OCI-LY7 (cell line): ENCODE measurements at regions of chr4 and their contacts with region 1.

Region 1: DNA sequence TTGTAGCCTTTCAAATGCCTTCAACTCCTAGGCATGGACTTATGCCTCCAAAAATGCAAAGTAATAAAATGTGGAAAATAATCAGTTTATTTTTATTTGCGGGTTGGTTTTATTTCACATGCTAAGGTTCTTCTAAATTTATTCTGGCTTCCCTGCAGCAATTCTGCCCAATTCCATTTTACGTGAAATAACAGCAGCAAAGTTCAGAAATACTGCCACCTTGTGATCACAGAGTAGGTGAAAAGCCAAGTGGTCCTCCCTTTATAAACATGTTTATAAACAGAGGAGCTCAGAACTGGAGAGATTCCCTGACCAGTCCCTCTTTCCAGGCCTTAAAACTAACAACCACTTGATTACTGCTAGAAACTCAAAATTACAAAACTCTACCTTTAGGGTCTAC is 14.7 kb upstream of the DCHS2 start:
- DNase-seq: peak; percentile 41
- H3K4me3 ChIP-seq: no peak overlapping the region
- H3K27ac ChIP-seq: no peak overlapping the region
- H3K4me1 ChIP-seq: no peaks in the 10 kb centered on the region
- CTCF ChIP-seq: peak; percentile 82

Region 2: GRCh38 chr4:154329268-154329868 is 176.9 kb before region 1 on chr4:
- CTCF ChIA-PET with region 1: interaction called, 4 read pairs
- POLR2A ChIA-PET with region 1: no interaction called
- intact Hi-C with region 1: loop called (anchors 2 kb)
- DNase-seq: peak; percentile 44
- H3K4me3 ChIP-seq: no peak overlapping the region
- H3K27ac ChIP-seq: no peak overlapping the region
- H3K4me1 ChIP-seq: no peaks in the 10 kb centered on the region
- CTCF ChIP-seq: peak; percentile 75

Region 3: DNA sequence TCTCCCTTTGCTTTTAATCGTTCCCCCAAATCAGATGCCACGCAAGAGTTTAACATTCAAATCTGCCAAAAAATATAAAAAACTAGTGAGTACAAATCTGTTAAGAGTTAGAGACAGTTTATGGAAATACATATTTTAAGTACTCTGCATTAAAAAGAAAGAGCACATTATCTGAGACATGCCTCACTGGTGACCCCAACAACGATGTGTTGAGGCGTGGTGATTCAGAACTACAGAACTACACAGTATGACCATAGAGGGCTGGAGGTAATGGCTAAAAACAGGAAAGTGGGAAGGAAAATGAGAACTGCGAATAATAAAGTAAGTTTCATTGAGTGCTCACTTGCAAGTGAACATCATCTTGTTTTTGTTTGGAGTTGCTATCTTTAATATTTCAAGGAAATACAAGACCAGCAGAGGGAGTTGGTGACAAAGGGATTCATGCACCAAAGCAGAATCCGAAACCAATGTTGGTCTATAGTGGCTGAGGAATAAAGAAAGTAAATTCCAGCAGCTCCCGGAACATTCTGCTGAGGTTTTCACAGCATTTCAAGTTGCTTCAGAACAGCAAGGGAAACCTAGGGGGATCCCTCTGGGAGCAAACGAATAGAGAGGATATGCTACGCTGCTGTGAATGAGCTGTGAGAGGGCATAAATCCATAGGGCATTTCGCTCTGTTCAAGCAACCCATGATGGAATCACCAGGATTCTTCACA is 106.8 kb before region 1 on chr4:
- CTCF ChIA-PET with region 1: no interaction called
- POLR2A ChIA-PET with region 1: interaction called, 3 read pairs
- intact Hi-C with region 1: loop called (anchors 5 kb)
- DNase-seq: no peak
- H3K4me3 ChIP-seq: no peak overlapping the region
- H3K27ac ChIP-seq: no peak overlapping the region
- H3K4me1 ChIP-seq: no peaks in the 10 kb centered on the region
- CTCF ChIP-seq: peak; percentile 48

Region 4: DNA sequence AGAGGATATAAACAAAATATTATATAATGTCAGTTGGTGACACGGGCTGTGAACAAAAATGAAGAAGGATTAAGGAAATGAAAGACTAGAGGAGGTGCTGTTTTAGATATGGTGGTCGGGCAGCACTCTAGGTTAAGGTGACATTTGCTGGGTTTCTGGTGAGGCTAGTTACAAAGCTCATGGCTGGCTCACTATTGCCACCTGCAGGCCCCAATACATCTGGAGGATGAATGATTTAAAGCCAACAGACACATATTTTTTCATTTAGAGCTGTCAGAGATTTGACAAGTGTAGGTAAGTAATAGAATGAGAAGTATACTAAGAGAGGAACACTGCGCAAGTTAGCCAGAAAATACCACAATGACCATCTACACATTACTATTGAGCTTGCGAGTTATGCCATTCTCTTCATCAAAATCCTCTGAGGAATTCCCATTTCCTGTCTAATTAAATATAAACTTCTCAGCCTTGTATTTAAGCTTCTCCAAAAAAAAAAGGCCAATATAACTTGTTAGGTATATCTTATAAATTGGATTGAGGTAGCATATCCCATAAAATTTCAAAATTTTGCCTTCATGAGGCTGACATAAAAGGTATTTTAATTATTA is 112.6 kb after region 1 on chr4:
- CTCF ChIA-PET with region 1: no interaction called
- POLR2A ChIA-PET with region 1: no interaction called
- intact Hi-C with region 1: loop called (anchors 1 kb)
- DNase-seq: peak; percentile 73
- H3K4me3 ChIP-seq: no peak overlapping the region
- H3K27ac ChIP-seq: no peak overlapping the region
- H3K4me1 ChIP-seq: peaks cover 9% of the 10 kb centered on the region
- CTCF ChIP-seq: peak; percentile 88

Region 5: DNA sequence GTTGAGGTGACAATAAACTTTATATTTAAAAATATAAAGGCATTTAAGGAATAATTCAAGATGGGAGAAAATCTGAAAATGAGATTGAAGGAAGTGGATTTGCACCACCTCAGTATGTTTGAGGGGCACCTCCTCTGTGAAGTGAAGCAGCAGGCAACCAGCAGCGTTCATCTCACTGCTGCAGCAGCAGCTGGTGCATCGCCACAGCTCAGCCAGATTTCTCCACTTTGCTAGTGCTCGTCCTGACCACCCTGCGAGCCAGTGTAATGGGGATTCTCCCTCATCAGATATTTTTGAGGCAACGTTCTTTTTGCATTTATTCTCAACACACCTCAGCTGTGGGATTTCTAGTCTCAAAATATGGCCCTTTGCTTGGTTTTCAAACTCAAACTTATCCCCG is 251.5 kb after region 1 on chr4:
- CTCF ChIA-PET with region 1: no interaction called
- POLR2A ChIA-PET with region 1: no interaction called
- intact Hi-C with region 1: no loop called
- DNase-seq: no peak
- H3K4me3 ChIP-seq: no peak overlapping the region
- H3K27ac ChIP-seq: no peak overlapping the region
- H3K4me1 ChIP-seq: no peaks in the 10 kb centered on the region
- CTCF ChIP-seq: no peak

Region 6: DNA sequence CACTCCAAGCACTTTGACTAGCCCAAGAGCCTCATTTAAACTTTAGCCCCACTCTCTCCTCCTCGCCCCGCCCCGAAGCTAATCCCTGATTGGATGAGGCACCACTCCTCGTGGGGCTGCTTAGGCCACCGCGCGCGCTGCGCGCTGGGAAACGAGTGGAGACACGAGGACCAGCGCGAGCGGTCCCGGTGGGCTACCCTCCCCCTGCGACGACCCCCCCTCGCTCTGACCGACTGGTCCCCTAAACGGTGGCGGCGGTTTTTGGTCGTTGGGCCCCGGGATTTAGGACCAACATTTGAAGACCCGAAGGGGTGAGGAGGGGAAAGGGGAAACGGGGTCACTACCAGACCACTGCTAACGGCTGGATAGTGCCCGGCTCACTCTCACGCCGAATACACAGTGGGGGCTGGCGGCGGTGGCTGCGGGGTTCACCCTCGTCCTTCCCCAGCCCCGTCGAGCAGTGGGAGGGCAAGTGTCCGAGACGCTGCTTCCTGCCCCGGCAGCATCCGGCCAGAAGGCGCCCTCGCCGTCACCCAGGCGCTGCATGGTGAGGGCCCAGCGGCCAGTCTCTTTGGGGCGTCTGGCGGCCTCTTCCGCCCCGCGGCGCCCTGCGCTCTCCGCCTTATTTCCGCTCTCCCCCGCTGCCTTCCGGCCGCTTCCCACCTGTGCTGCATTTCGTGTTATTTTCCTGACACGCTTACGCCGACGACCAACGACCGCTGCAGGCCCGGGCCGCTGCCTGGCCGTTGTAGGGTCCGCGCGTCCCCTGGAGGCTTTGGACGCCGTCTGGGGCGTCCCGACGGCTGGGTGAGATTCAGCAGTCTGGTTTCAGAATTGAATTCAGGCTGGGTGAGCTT is 275.1 kb after region 1 on chr4 and contains the start of gene RBM46:
- CTCF ChIA-PET with region 1: no interaction called
- POLR2A ChIA-PET with region 1: no interaction called
- intact Hi-C with region 1: no loop called
- DNase-seq: no peak
- H3K4me3 ChIP-seq: no peak within 1 kb of the TSS
- H3K27ac ChIP-seq: no peak within 1 kb of the TSS
- H3K4me1 ChIP-seq: no peaks in the 10 kb centered on the region
- CTCF ChIP-seq: no peak
- total RNA-seq, gene RBM46: not detected in 2 replicates